ENCODE measurements at regions of chr15 and their contacts with region 1.

Region 1: DNA sequence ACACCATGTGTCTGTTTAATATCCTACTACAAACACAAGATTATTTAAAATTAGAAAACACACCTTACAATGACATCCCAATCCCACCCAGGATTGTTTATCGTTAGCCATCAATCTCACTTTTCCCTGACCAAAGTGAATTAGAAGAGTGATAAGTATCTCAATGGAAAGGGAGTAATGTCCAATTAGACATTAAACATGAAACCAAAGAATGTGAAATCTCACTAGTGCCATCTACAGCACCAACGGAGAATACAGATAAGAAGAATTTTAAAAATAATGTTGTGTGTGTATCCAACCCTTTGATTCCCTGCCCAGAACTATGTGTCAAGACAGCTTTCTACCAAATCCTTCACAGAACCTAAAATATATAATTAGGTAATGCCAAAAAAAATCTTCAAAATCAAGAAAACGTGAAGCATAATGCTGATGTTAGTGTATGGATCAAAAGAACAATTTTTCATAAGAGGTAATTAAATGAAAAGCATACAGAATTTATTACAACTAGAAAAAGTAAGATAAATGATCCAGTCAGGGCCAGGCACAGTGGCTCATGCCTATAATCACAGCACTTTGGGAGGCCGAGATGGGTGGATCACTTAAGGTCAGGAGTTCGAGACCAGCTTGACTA is 64.2 kb downstream of the SCAPER start:
- DNase-seq: no peak
- ATAC-seq: no peak
- H3K4me3 Mint-ChIP-seq: no peak overlapping the region
- H3K27ac Mint-ChIP-seq: no peak overlapping the region
- H3K4me1 Mint-ChIP-seq: peaks cover 28% of the 10 kb centered on the region
- H3K27me3 Mint-ChIP-seq: no peaks in the 10 kb centered on the region

Region 2: DNA sequence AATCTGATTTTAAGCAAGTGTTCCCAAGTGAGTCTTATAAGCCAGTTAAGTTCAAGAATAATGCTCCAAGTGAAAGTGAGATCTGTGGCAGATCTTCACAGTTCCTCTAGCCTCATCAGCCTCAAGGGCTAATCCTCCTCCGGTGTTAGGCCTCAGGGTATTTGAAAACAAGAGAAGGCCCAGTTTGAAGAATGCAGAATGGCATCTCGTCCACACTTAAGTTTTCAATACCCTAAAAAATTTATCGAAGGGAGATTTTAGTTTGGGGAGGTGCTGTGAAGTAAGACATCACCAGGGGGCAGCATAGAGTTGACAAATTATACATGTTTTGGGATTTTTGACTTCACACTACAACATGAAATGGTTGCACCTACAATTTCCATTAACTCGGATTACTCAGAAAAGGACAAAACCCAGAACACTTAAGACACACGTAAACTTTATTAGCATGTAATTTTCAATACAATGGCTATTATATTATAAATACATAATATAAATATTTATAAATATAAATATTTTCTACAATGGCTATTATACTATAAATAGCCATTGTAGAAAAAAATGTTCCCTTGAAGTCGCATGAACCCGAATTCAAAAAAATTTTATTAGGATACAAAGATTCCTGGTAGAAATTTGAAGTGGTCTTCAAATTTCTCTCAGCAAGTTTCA is 783.5 kb before region 1 on chr15:
- CTCF ChIA-PET with region 1: no interaction called
- POLR2A ChIA-PET with region 1: no interaction called
- intact Hi-C with region 1: no loop called
- DNase-seq: peak; percentile 62
- ATAC-seq: peak; percentile 55
- H3K4me3 Mint-ChIP-seq: no peak overlapping the region
- H3K27ac Mint-ChIP-seq: no peak overlapping the region
- H3K4me1 Mint-ChIP-seq: peaks cover 23% of the 10 kb centered on the region
- H3K27me3 Mint-ChIP-seq: peaks cover 34% of the 10 kb centered on the region

Region 3: DNA sequence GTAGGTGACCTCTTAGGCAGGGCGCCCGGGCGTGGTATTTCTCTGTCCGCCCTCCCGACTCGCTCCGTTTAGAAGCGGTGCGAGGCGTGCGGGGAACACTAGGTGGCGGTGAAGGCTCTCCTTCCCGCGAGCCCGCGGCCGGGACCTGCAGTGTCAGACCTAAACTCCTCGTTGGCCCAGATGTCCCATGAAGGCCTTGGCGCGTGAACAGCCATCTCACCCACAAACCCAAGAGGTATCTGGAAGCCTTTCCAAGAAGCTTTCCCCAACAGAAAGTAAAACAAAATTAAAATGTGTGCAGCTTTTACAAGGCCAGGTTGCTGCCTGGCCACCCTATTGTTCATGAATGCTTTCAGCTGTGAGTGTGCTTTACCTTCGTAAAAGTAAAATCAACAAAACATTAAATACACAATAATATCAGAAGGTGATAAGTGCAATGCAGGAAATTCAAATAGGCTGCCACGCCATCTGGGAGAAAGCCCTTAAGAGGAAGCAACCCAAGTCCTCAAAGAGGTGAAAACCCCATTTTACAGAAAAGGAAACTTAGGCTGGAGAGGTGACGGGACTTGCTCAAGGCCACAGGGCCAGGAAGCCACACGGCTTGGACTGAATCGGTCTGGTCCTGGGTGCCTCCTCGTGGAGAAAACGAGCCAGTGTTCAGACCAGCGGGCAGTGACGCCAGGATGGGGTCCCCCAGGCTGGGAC is 650.0 kb before region 1 on chr15:
- CTCF ChIA-PET with region 1: no interaction called
- POLR2A ChIA-PET with region 1: no interaction called
- intact Hi-C with region 1: loop called in 1 of 2 experiments (anchors 1 kb)
- DNase-seq: peak; percentile 88
- ATAC-seq: peak; percentile 98
- H3K4me3 Mint-ChIP-seq: no peak overlapping the region
- H3K27ac Mint-ChIP-seq: no peak overlapping the region
- H3K4me1 Mint-ChIP-seq: peaks cover 9% of the 10 kb centered on the region
- H3K27me3 Mint-ChIP-seq: peaks cover 41% of the 10 kb centered on the region

Region 4: GRCh38 chr15:76642671-76643070 is 198.3 kb before region 1 on chr15:
- CTCF ChIA-PET with region 1: interaction called, 6 read pairs
- POLR2A ChIA-PET with region 1: no interaction called
- intact Hi-C with region 1: loop called in 1 of 2 experiments (anchors 2 kb)
- DNase-seq: no peak
- ATAC-seq: no peak
- H3K4me3 Mint-ChIP-seq: no peak overlapping the region
- H3K27ac Mint-ChIP-seq: no peak overlapping the region
- H3K4me1 Mint-ChIP-seq: no peaks in the 10 kb centered on the region
- H3K27me3 Mint-ChIP-seq: no peaks in the 10 kb centered on the region

Region 5: DNA sequence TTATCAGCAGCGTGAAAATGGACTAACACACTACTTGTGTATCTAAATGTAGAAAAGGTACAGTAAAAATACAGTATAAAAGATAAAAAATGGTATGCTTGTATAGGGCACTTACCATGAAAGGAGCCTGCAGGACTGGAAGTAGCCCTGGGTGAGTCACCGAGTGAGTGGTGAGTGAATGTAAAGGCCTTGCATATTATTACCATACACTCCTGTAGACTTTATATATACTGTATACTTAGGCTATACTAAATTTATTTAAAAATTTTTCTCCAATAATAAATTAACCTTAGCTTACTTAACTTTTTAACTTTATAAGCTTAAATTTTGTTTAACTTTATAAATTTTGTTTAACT is 297.2 kb after region 1 on chr15:
- CTCF ChIA-PET with region 1: no interaction called
- POLR2A ChIA-PET with region 1: no interaction called
- intact Hi-C with region 1: no loop called
- DNase-seq: no peak
- ATAC-seq: no peak
- H3K4me3 Mint-ChIP-seq: no peak overlapping the region
- H3K27ac Mint-ChIP-seq: no peak overlapping the region
- H3K4me1 Mint-ChIP-seq: no peaks in the 10 kb centered on the region
- H3K27me3 Mint-ChIP-seq: no peaks in the 10 kb centered on the region

Region 6: GRCh38 chr15:77186594-77187011 is 345.7 kb after region 1 on chr15:
- CTCF ChIA-PET with region 1: no interaction called
- POLR2A ChIA-PET with region 1: no interaction called
- intact Hi-C with region 1: no loop called
- DNase-seq: peak; percentile 30
- ATAC-seq: no peak
- H3K4me3 Mint-ChIP-seq: no peak overlapping the region
- H3K27ac Mint-ChIP-seq: no peak overlapping the region
- H3K4me1 Mint-ChIP-seq: peaks cover 55% of the 10 kb centered on the region
- H3K27me3 Mint-ChIP-seq: no peaks in the 10 kb centered on the region